ENCODE measurements at regions of chr2 and their contacts with region 1.

Region 1: DNA sequence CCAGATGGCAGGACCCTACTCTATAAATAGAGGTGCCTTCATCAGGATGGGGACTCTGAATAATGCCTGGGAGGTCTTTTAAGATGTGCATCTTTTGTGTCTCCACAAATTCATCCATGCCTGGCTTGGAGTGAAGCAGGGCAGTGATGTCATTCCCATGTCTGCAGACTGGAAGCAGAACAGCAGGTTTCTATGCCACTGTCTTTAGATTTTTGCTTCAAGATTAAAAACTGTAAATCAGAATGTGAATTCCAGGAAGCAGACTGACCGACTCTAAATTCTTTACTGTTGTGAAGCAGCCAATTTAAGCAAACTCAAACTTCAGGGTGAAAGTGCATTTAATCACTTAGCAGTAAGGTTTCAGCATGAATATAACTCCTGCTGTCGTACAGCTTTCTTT is 159.3 kb downstream of the SCG2 start:
- DNase-seq: no peak
- H3K4me3 ChIP-seq: no peak overlapping the region
- H3K27ac ChIP-seq: no peak overlapping the region
- H3K4me1 ChIP-seq: no peaks in the 10 kb centered on the region
- H3K27me3 ChIP-seq: no peaks in the 10 kb centered on the region
- CTCF ChIP-seq: no peak

Region 2: GRCh38 chr2:223262946-223263345 is 179.9 kb before region 1 on chr2:
- CTCF ChIA-PET with region 1: no interaction called
- POLR2A ChIA-PET with region 1: interaction called, 10 read pairs
- intact Hi-C with region 1: no loop called
- DNase-seq: peak; percentile 63 to 73
- H3K4me3 ChIP-seq: no peak overlapping the region
- H3K27ac ChIP-seq: no peak overlapping the region
- H3K4me1 ChIP-seq: peaks cover 11% of the 10 kb centered on the region
- H3K27me3 ChIP-seq: no peaks in the 10 kb centered on the region
- CTCF ChIP-seq: no peak

Measured in PC-9 (cell line).